BJ (cell line): ENCODE measurements at regions of chr1 and their contacts with region 1.

Region 1: GRCh38 chr1:94025383-94026340 is 95.3 kb downstream of the ABCA4 start:
- DNase-seq: no peak
- H3K4me3 ChIP-seq: no peak overlapping the region
- H3K27me3 ChIP-seq: peaks cover 2% of the 10 kb centered on the region; the same call in 1 of the 2 replicates
- CTCF ChIP-seq: peak; percentile 67

Region 2: GRCh38 chr1:93980320-93981273 is 45.1 kb before region 1 on chr1:
- CTCF ChIA-PET with region 1: interaction called, 11 read pairs
- POLR2A ChIA-PET with region 1: no interaction called
- DNase-seq: no peak
- H3K4me3 ChIP-seq: no peak overlapping the region
- H3K27me3 ChIP-seq: no peaks in the 10 kb centered on the region
- CTCF ChIP-seq: peak; percentile 26; the same call in 1 of the 2 replicates

Region 3: DNA sequence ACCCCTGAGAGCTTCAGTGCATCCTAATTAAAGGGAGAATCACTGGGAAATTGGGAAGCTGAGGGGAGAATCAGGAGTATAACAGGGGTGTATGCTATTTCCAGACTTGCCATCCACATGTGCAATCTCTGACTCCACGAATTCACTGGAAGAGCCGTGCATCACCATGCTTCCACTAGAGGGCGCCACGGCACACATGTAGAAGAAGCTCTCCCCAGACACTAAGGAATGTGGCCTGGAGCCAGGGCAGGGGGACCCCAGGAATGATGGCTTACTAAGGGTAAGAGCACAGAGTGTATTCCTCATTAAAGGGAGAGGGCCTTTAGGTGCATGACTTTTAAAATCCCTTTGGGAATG is 13.8 kb after region 1 on chr1:
- CTCF ChIA-PET with region 1: interaction called, 134 read pairs
- POLR2A ChIA-PET with region 1: interaction called, 8 read pairs
- DNase-seq: no peak
- H3K4me3 ChIP-seq: no peak overlapping the region
- H3K27me3 ChIP-seq: no peaks in the 10 kb centered on the region; the same call in 1 of the 2 replicates
- CTCF ChIP-seq: peak; percentile 86

Region 4: GRCh38 chr1:94045465-94046056 is 19.9 kb after region 1 on chr1:
- CTCF ChIA-PET with region 1: interaction called, 134 read pairs
- POLR2A ChIA-PET with region 1: no interaction called
- DNase-seq: peak; percentile 86
- H3K4me3 ChIP-seq: no peak overlapping the region
- H3K27me3 ChIP-seq: no peaks in the 10 kb centered on the region
- CTCF ChIP-seq: peak; percentile 71

Region 5: DNA sequence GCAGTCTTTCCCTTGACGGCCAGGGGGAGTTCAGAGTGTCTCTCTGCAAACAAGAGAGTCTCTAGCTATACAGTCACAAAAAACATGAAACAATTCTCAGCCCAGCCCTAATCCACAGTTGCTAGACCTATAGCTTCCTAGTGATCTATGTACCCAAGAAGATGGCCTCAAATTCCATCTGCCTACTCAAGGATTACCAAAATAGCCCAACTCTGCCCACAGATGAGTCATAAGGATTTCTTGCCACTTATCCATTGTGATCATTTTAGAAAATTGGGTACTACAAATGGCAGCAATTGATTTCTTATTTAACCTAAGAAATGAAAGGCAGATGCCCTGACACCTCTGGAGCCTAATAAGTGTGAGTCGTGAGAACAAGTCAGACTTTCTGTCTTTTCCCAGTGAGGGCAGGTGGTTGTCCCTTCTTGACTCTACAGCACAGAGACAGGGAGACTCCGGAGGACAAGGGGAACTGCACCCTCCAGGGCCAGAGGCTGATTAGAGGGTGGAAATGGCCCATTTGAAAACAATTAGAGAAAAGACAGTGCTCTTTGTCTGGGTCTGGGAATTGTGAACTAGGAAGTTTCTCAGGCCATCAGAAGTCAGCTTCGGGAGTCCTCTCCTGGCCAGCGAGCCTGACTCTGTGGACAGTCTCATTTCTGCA is 29.9 kb after region 1 on chr1:
- CTCF ChIA-PET with region 1: interaction called, 32 read pairs
- POLR2A ChIA-PET with region 1: no interaction called
- DNase-seq: no peak
- H3K4me3 ChIP-seq: no peak overlapping the region
- H3K27me3 ChIP-seq: no peaks in the 10 kb centered on the region
- CTCF ChIP-seq: no peak

Region 6: GRCh38 chr1:94105957-94106529 is 80.4 kb after region 1 on chr1:
- CTCF ChIA-PET with region 1: no interaction called
- POLR2A ChIA-PET with region 1: no interaction called
- DNase-seq: no peak
- H3K4me3 ChIP-seq: no peak overlapping the region
- H3K27me3 ChIP-seq: no peaks in the 10 kb centered on the region
- CTCF ChIP-seq: no peak